ENCODE measurements at regions of chr3 and their contacts with region 1.

Region 1: GRCh38 chr3:88058591-88059368 is at the starts of genes CGGBP1 and ZNF654:
- DNase-seq: peak; percentile 98
- H3K4me3 ChIP-seq: peak within 1 kb of the TSS; percentile 84
- H3K27ac ChIP-seq: peak within 1 kb of the TSS; percentile 68
- H3K4me1 ChIP-seq: peaks cover 29% of the 10 kb centered on the region
- CTCF ChIP-seq: no peak
- total RNA-seq, gene CGGBP1: 52.8 and 54.4 TPM in 2 replicates
- total RNA-seq, gene ZNF654: 5.4 and 5.6 TPM in 2 replicates

Region 2: DNA sequence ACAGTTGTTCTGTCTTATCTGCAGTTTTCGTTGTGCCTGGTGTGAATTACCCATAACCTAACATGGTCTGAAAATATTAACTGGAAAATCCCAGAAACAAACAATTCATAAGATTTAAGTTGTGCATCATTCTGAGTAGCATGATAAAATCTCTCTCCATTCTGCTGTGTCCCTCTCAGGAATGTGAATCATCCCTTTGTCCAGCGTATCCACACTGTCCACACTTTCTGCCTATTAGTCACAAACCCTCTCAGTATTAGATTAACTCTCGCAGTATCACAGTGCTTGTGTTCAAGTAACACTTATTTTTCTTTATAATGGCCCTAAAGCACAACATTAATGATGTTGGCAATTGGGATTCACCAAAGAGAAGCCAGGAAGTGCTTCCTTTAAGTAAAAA is 203.2 kb before region 1 on chr3:
- CTCF ChIA-PET with region 1: no interaction called
- POLR2A ChIA-PET with region 1: no interaction called
- intact Hi-C with region 1: no loop called
- DNase-seq: no peak
- H3K4me3 ChIP-seq: no peak overlapping the region
- H3K27ac ChIP-seq: no peak overlapping the region
- H3K4me1 ChIP-seq: no peaks in the 10 kb centered on the region
- CTCF ChIP-seq: no peak

Region 3: GRCh38 chr3:88031642-88032077 is 27.1 kb before region 1 on chr3:
- CTCF ChIA-PET with region 1: interaction called, 3 read pairs
- POLR2A ChIA-PET with region 1: interaction called, 18 read pairs
- intact Hi-C with region 1: loop called (anchors 2 kb)
- DNase-seq: peak; percentile 60
- H3K4me3 ChIP-seq: peak overlapping the region; percentile 65
- H3K27ac ChIP-seq: no peak overlapping the region
- H3K4me1 ChIP-seq: peaks cover 19% of the 10 kb centered on the region
- CTCF ChIP-seq: no peak

Region 4: GRCh38 chr3:88090681-88091080 is 31.9 kb after region 1 on chr3:
- CTCF ChIA-PET with region 1: no interaction called
- POLR2A ChIA-PET with region 1: interaction called, 12 read pairs
- intact Hi-C with region 1: no loop called
- DNase-seq: no peak
- H3K4me3 ChIP-seq: no peak overlapping the region
- H3K27ac ChIP-seq: no peak overlapping the region
- H3K4me1 ChIP-seq: no peaks in the 10 kb centered on the region
- CTCF ChIP-seq: no peak

Region 5: GRCh38 chr3:88113311-88114162 is 54.8 kb after region 1 on chr3:
- CTCF ChIA-PET with region 1: no interaction called
- POLR2A ChIA-PET with region 1: interaction called, 3 read pairs
- intact Hi-C with region 1: loop called (anchors 5 kb)
- DNase-seq: peak; percentile 72
- H3K4me3 ChIP-seq: no peak overlapping the region
- H3K27ac ChIP-seq: no peak overlapping the region
- H3K4me1 ChIP-seq: no peaks in the 10 kb centered on the region
- CTCF ChIP-seq: peak; percentile 92

Region 6: GRCh38 chr3:88398581-88398980 is 339.8 kb after region 1 on chr3:
- CTCF ChIA-PET with region 1: no interaction called
- POLR2A ChIA-PET with region 1: no interaction called
- intact Hi-C with region 1: no loop called
- DNase-seq: no peak
- H3K4me3 ChIP-seq: no peak overlapping the region
- H3K27ac ChIP-seq: no peak overlapping the region
- H3K4me1 ChIP-seq: no peaks in the 10 kb centered on the region
- CTCF ChIP-seq: no peak